HepG2 (cell line): ENCODE measurements at regions of chr1 and their contacts with region 1.

Region 1: GRCh38 chr1:29793101-29793546 is 556.8 kb downstream of the PTPRU start:
- DNase-seq: peak; percentile 74
- ATAC-seq: peak; percentile 89
- H3K4me3 ChIP-seq: no peak overlapping the region; a peak in 1 of 6 replicates
- H3K27ac ChIP-seq: no peak overlapping the region
- H3K4me1 ChIP-seq: no peaks in the 10 kb centered on the region
- H3K27me3 ChIP-seq: no peaks in the 10 kb centered on the region
- CTCF ChIP-seq: peak; percentile 92
- EP300 ChIP-seq: no peak
- POLR2A ChIP-seq: no peak
- RAD21 ChIP-seq: peak; percentile 75

Region 2: GRCh38 chr1:29732453-29732852 is 60.7 kb before region 1 on chr1:
- CTCF ChIA-PET with region 1: no interaction called
- POLR2A ChIA-PET with region 1: no interaction called
- in situ Hi-C with region 1: no loop called
- intact Hi-C with region 1: no loop called
- DNase-seq: no peak
- ATAC-seq: no peak
- H3K4me3 ChIP-seq: no peak overlapping the region
- H3K27ac ChIP-seq: no peak overlapping the region
- H3K4me1 ChIP-seq: no peaks in the 10 kb centered on the region
- H3K27me3 ChIP-seq: no peaks in the 10 kb centered on the region
- CTCF ChIP-seq: no peak
- EP300 ChIP-seq: no peak
- POLR2A ChIP-seq: no peak
- RAD21 ChIP-seq: no peak

Region 3: GRCh38 chr1:29782846-29783500 is 10.2 kb before region 1 on chr1:
- CTCF ChIA-PET with region 1: no interaction called
- POLR2A ChIA-PET with region 1: no interaction called
- in situ Hi-C with region 1: no loop called
- intact Hi-C with region 1: no loop called
- DNase-seq: no peak
- ATAC-seq: no peak
- H3K4me3 ChIP-seq: no peak overlapping the region
- H3K27ac ChIP-seq: no peak overlapping the region
- H3K4me1 ChIP-seq: no peaks in the 10 kb centered on the region
- H3K27me3 ChIP-seq: peaks cover 0 to 7% of the 10 kb centered on the region in 2 experiments; a peak in 1 of 5 replicates
- CTCF ChIP-seq: no peak
- EP300 ChIP-seq: no peak
- POLR2A ChIP-seq: no peak
- RAD21 ChIP-seq: no peak

Region 4: GRCh38 chr1:29838738-29839320 is 45.7 kb after region 1 on chr1:
- CTCF ChIA-PET with region 1: no interaction called
- POLR2A ChIA-PET with region 1: no interaction called
- in situ Hi-C with region 1: no loop called
- intact Hi-C with region 1: no loop called
- DNase-seq: no peak
- ATAC-seq: no peak
- H3K4me3 ChIP-seq: no peak overlapping the region
- H3K27ac ChIP-seq: no peak overlapping the region
- H3K4me1 ChIP-seq: no peaks in the 10 kb centered on the region
- H3K27me3 ChIP-seq: no peaks in the 10 kb centered on the region
- CTCF ChIP-seq: no peak
- EP300 ChIP-seq: no peak
- POLR2A ChIP-seq: no peak
- RAD21 ChIP-seq: no peak

Region 5: DNA sequence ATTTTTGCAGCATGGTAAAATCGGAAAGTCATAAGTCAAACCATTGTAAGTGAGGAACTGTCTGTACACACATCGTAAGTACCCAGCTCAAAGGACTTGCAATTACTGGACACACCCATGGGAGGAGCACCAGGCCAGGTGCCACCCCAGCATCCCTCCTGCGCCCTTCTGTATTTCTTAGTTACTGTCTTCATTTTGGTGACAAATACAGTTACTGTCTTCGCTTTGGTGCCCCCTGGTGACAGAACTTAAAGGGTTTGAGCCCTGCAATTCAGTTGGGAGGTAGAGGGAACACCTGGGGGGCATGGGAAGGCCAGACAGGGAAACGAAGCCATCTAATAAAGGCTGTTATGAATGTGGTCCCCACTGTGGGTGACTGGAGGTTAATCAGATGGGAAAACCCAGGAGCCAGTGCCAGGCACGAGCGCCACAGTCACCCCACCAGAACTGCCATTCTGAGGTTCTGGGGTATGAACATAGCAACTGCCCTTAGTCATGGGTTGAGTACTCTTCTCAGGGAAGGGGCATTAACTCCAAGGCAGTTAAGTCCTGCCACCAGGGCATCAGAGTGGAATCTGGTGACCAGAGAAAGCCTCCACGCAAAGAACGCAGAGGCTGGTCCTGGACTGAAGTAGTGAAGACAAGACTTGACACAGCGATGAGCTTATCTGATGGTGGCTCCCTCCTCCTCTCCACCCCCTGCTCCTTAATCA is 56.1 kb after region 1 on chr1:
- CTCF ChIA-PET with region 1: interaction called, 5 read pairs
- POLR2A ChIA-PET with region 1: no interaction called
- in situ Hi-C with region 1: no loop called
- intact Hi-C with region 1: loop called (anchors 1 kb)
- DNase-seq: peak; percentile 32
- ATAC-seq: peak; percentile 35; the same call in 2 of the 3 replicates
- H3K4me3 ChIP-seq: no peak overlapping the region
- H3K27ac ChIP-seq: no peak overlapping the region
- H3K4me1 ChIP-seq: no peaks in the 10 kb centered on the region
- H3K27me3 ChIP-seq: peaks cover 0 to 3% of the 10 kb centered on the region in 2 experiments; a peak in 1 of 5 replicates
- CTCF ChIP-seq: peak; percentile 54
- EP300 ChIP-seq: no peak
- POLR2A ChIP-seq: no peak
- RAD21 ChIP-seq: no peak

Region 6: GRCh38 chr1:30085811-30086770 is 293.0 kb after region 1 on chr1:
- CTCF ChIA-PET with region 1: interaction called, 6 read pairs
- POLR2A ChIA-PET with region 1: no interaction called
- in situ Hi-C with region 1: loop called (anchors 10 kb)
- intact Hi-C with region 1: no loop called
- DNase-seq: peak; percentile 8
- ATAC-seq: peak; percentile 75
- H3K4me3 ChIP-seq: no peak overlapping the region
- H3K27ac ChIP-seq: no peak overlapping the region
- H3K4me1 ChIP-seq: peaks cover 13% of the 10 kb centered on the region
- H3K27me3 ChIP-seq: peaks cover 2 to 14% of the 10 kb centered on the region in 2 experiments; a peak in 2 of 5 replicates
- CTCF ChIP-seq: peak; percentile 66
- EP300 ChIP-seq: no peak
- POLR2A ChIP-seq: no peak
- RAD21 ChIP-seq: peak; percentile 54; the same call in 1 of the 2 replicates

Region 7: GRCh38 chr1:30106125-30106524 is 313.0 kb after region 1 on chr1:
- CTCF ChIA-PET with region 1: interaction called, 7 read pairs
- POLR2A ChIA-PET with region 1: no interaction called
- in situ Hi-C with region 1: loop called (anchors 10 kb)
- intact Hi-C with region 1: no loop called
- DNase-seq: peak; percentile 25
- ATAC-seq: peak; percentile 98
- H3K4me3 ChIP-seq: no peak overlapping the region
- H3K27ac ChIP-seq: no peak overlapping the region
- H3K4me1 ChIP-seq: no peaks in the 10 kb centered on the region
- H3K27me3 ChIP-seq: peaks cover 1 to 12% of the 10 kb centered on the region in 2 experiments
- CTCF ChIP-seq: peak; percentile 71
- EP300 ChIP-seq: no peak
- POLR2A ChIP-seq: no peak
- RAD21 ChIP-seq: no peak

Region 8: GRCh38 chr1:30707412-30708360 is 914.6 kb after region 1 on chr1:
- CTCF ChIA-PET with region 1: no interaction called
- POLR2A ChIA-PET with region 1: no interaction called
- in situ Hi-C with region 1: loop called (anchors 10 kb)
- intact Hi-C with region 1: loop called (anchors 5 kb)
- DNase-seq: peak; percentile 38
- ATAC-seq: peak; percentile 90
- H3K4me3 ChIP-seq: no peak overlapping the region
- H3K27ac ChIP-seq: no peak overlapping the region
- H3K4me1 ChIP-seq: no peaks in the 10 kb centered on the region
- H3K27me3 ChIP-seq: peaks cover 1 to 15% of the 10 kb centered on the region in 2 experiments; a peak in 2 of 5 replicates
- CTCF ChIP-seq: peak; percentile 94
- EP300 ChIP-seq: no peak
- POLR2A ChIP-seq: no peak
- RAD21 ChIP-seq: peak; percentile 96